HAP-1 (cell line): ENCODE measurements at regions of chr6 and their contacts with region 1.

Region 1: DNA sequence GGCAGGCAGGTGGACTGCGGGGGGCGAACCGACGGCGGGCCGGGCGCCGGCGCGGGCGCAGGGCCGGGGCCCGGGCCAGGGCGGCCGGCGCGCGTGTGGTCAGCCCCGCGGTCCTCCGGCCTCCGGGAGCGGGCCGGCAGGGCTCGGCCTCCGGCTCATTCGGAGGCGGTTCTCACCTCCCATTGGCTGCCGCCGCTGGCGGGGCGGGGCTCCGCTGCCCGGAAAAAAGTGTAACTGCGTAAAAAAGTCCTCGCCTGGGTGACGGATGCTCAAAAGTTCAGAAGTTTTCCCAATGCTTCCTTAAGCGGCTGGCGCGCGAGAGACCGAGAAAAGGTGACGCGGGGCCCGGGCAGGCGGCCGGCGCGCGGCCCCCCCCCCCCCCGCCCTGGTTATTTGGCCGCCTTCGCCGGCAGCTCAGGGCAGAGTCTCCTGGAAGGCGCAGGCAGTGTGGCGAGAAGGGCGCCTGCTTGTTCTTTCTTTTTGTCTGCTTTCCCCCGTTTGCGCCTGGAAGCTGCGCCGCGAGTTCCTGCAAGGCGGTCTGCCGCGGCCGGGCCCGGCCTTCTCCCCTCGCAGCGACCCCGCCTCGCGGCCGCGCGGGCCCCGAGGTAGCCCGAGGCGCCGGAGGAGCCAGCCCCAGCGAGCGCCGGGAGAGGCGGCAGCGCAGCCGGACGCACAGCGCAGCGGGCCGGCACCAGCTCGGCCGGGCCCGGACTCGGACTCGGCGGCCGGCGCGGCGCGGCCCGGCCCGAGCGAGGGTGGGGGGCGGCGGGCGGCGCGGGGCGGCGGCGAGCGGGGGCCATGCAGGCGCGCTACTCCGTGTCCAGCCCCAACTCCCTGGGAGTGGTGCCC is at the start of gene FOXC1:
- DNase-seq: peak; percentile 93
- H3K4me3 ChIP-seq: peak within 1 kb of the TSS; percentile 70
- H3K4me1 ChIP-seq: peaks cover 21% of the 10 kb centered on the region
- H3K27me3 ChIP-seq: no peaks in the 10 kb centered on the region

Region 2: DNA sequence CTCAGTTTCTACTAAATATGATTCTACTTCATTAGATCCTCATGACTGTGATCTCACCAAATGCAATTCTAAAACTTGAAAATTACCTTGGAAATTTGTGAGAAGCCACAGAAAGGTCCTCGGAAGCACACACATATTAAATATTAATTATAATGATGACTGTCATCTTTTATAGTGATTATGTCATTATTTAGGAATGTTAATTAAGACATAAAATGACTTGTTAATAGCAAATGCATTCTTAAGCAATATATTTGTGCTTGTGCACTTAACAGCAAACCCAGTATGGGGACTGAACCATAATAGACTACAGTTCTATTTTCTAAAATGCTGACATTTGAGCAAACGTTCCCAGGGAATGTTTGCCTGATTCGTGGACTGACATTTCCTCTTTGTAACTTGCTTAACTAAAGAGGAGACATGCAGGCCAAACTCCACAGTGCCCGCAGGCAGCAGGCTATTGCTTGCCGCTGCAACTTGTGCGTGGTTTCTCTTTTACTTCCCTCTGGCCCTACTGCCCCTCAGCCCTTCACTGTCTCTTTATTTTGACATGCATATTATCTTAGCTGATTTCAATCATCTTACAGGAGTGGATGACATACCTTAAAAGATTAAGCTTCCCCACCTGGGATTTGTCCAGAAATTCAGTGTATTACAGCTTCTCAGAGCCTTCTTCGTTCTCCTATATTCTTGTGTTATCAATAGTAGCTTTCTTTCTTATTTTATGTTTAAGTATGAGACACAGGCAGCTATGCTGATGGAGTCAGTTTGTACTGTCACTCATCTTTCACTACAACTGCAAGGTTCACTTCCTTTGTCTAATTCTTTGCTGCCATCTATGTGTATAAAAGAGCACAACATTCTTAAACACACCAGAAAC is 494.0 kb after region 1 on chr6:
- in situ Hi-C with region 1: loop called (anchors 25 kb)
- DNase-seq: peak in 1 of 2 experiments; percentile 76
- H3K4me3 ChIP-seq: no peak overlapping the region
- H3K4me1 ChIP-seq: peaks cover 5% of the 10 kb centered on the region
- H3K27me3 ChIP-seq: no peaks in the 10 kb centered on the region

Region 3: GRCh38 chr6:2196079-2196679 is 586.3 kb after region 1 on chr6:
- in situ Hi-C with region 1: loop called (anchors 10 kb)
- DNase-seq: peak; percentile 57 to 66
- H3K4me3 ChIP-seq: no peak overlapping the region
- H3K4me1 ChIP-seq: no peaks in the 10 kb centered on the region
- H3K27me3 ChIP-seq: no peaks in the 10 kb centered on the region